ENCODE measurements at regions of chr11 and their contacts with region 1.

Region 1: GRCh38 chr11:20337526-20338154 is 25.9 kb upstream of the HTATIP2 start:
- DNase-seq: peak; percentile 44
- H3K4me3 ChIP-seq: no peak overlapping the region
- H3K27ac ChIP-seq: no peak overlapping the region
- H3K4me1 ChIP-seq: no peaks in the 10 kb centered on the region
- H3K27me3 ChIP-seq: peaks cover 83% of the 10 kb centered on the region

Region 2: GRCh38 chr11:19938169-19938856 is 399.3 kb before region 1 on chr11:
- in situ Hi-C with region 1: loop called (anchors 25 kb)
- DNase-seq: peak; percentile 82
- H3K4me3 ChIP-seq: no peak overlapping the region
- H3K27ac ChIP-seq: no peak overlapping the region
- H3K4me1 ChIP-seq: peaks cover 19% of the 10 kb centered on the region
- H3K27me3 ChIP-seq: no peaks in the 10 kb centered on the region

Region 3: DNA sequence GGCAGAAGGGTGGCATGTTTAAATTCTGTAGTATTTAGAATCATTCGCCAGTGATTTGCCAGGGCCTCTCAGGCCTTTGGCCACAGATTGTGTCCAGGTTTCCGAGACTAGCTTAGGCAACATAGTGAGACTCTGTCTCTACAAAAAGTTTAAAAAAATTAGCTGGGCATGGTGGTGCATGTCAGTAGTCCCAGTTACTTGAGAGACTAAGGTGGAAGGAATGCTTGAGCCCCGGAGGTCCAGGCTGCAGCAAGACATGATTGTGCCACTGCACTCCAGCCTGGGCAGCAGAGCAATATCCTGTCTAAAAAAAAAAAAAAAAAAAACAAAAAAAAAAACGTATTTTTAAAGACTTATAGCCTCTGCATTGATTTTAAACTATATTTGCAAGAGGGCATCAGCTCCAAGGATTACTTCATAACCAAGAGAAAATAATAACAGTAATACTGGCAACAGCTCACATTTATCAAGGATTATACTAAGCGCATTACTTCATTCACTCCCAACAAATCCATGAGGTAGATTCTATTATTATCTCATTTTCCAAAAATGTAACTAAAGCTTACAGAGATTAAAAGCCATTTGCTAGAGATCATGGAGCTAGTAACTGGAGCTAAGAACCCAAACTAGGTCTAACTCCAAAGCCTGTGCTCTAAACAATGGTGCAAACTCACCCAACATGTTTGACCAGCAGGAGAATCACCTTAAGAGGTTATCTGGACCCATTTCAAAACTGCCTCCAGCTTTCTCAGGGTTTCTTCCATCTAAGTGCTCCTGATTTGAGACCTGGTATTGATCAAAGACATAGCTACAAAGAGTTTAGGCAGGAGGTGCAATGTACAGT is 229.2 kb after region 1 on chr11:
- in situ Hi-C with region 1: no loop called
- DNase-seq: no peak
- H3K4me3 ChIP-seq: no peak overlapping the region
- H3K27ac ChIP-seq: no peak overlapping the region
- H3K4me1 ChIP-seq: no peaks in the 10 kb centered on the region
- H3K27me3 ChIP-seq: no peaks in the 10 kb centered on the region

Measured in GM23248 (cell line).